ENCODE measurements at regions of chrX and their contacts with region 1.

Region 1: DNA sequence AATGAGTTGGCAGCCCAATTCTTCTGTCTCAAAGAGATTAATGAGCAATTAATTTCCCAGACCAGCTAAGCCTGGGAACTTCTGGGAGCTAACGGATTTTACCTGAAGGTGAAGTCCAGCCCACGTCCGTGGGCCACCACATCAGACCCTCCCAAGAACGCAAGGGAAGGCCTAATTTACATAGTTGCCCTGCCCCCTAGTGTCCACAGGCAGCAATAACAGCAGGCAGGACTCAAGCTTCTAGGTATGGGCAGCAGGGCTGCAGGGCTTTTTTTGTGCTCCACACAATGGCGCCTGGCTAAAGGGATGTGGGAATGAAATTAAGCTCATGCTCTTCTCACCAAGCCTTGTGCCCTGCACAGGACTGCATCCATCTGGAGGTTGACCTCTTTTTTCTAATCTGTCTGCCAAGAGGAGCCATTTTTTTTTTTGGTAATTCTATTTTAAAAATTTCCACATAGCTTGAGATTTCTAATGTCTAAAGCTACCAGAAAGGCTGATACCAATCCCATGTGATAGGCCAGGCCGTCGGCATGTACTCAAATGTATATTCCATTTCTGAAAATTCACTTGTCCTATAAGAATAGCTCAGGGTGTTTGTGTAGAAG is 111.9 kb upstream of the TMEM164 start:
- DNase-seq: peak in 1 of 2 experiments; percentile 54
- H3K4me3 ChIP-seq: no peak overlapping the region
- H3K27ac ChIP-seq: no peak overlapping the region
- H3K4me1 ChIP-seq: no peaks in the 10 kb centered on the region
- H3K27me3 ChIP-seq: no peaks in the 10 kb centered on the region
- CTCF ChIP-seq: peak; percentile 98

Region 2: GRCh38 chrX:108199691-108200090 is 1691.3 kb before region 1 on chrX:
- CTCF ChIA-PET with region 1: no interaction called
- POLR2A ChIA-PET with region 1: no interaction called
- intact Hi-C with region 1: loop called (anchors 5 kb)
- DNase-seq: peak; percentile 43 to 44
- H3K4me3 ChIP-seq: no peak overlapping the region
- H3K27ac ChIP-seq: no peak overlapping the region
- H3K4me1 ChIP-seq: no peaks in the 10 kb centered on the region
- H3K27me3 ChIP-seq: no peaks in the 10 kb centered on the region
- CTCF ChIP-seq: peak; percentile 77

Region 3: GRCh38 chrX:109635176-109635575 is 255.8 kb before region 1 on chrX:
- CTCF ChIA-PET with region 1: interaction called, 9 read pairs
- POLR2A ChIA-PET with region 1: no interaction called
- intact Hi-C with region 1: loop called (anchors 5 kb)
- DNase-seq: peak in 1 of 2 experiments; percentile 4
- H3K4me3 ChIP-seq: no peak overlapping the region
- H3K27ac ChIP-seq: no peak overlapping the region
- H3K4me1 ChIP-seq: no peaks in the 10 kb centered on the region
- H3K27me3 ChIP-seq: no peaks in the 10 kb centered on the region
- CTCF ChIP-seq: peak; percentile 71

Region 4: GRCh38 chrX:109760241-109760922 is 130.6 kb before region 1 on chrX:
- CTCF ChIA-PET with region 1: interaction called, 19 read pairs
- POLR2A ChIA-PET with region 1: no interaction called
- intact Hi-C with region 1: no loop called
- DNase-seq: peak; percentile 12 to 47
- H3K4me3 ChIP-seq: no peak overlapping the region
- H3K27ac ChIP-seq: no peak overlapping the region
- H3K4me1 ChIP-seq: peaks cover 15% of the 10 kb centered on the region
- H3K27me3 ChIP-seq: no peaks in the 10 kb centered on the region
- CTCF ChIP-seq: no peak

Region 5: GRCh38 chrX:109793191-109793590 is 97.8 kb before region 1 on chrX:
- CTCF ChIA-PET with region 1: no interaction called
- POLR2A ChIA-PET with region 1: no interaction called
- intact Hi-C with region 1: no loop called
- DNase-seq: peak in 1 of 2 experiments; percentile 40
- H3K4me3 ChIP-seq: no peak overlapping the region
- H3K27ac ChIP-seq: no peak overlapping the region
- H3K4me1 ChIP-seq: peaks cover 9% of the 10 kb centered on the region
- H3K27me3 ChIP-seq: no peaks in the 10 kb centered on the region
- CTCF ChIP-seq: no peak

Region 6: DNA sequence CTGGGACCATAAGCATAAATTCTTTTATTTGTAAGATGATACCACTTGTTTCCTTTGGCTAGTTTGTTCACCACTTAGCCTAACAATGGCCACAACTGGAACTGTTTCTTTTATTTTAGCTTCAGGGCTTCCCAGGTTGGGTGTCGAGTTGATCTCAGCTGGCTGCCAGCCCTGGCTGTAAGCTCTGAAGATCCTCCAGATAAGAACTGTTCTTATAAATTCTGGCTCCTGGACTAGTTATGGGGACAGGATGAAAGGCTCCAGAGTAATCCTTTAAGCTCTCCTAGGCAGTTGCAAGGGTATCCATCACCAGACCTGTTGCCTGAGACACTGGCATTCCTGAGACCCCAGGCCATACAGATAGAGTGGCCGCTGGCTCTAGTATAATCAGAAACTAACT is 28.6 kb before region 1 on chrX:
- CTCF ChIA-PET with region 1: no interaction called
- POLR2A ChIA-PET with region 1: no interaction called
- intact Hi-C with region 1: loop called (anchors 2 kb)
- DNase-seq: peak; percentile 41 to 57
- H3K4me3 ChIP-seq: no peak overlapping the region
- H3K27ac ChIP-seq: no peak overlapping the region
- H3K4me1 ChIP-seq: 0 out of 2 replicates have a peak, but pooled peaks cover 10% of the 10 kb centered on the region
- H3K27me3 ChIP-seq: no peaks in the 10 kb centered on the region
- CTCF ChIP-seq: no peak

Region 7: GRCh38 chrX:109911046-109911445 is 20.0 kb after region 1 on chrX:
- CTCF ChIA-PET with region 1: no interaction called
- POLR2A ChIA-PET with region 1: no interaction called
- intact Hi-C with region 1: no loop called
- DNase-seq: no peak
- H3K4me3 ChIP-seq: no peak overlapping the region
- H3K27ac ChIP-seq: no peak overlapping the region
- H3K4me1 ChIP-seq: no peaks in the 10 kb centered on the region
- H3K27me3 ChIP-seq: no peaks in the 10 kb centered on the region
- CTCF ChIP-seq: peak; percentile 80

Region 8: GRCh38 chrX:110418316-110419235 is 527.6 kb after region 1 on chrX:
- CTCF ChIA-PET with region 1: no interaction called
- POLR2A ChIA-PET with region 1: interaction called, 10 read pairs
- intact Hi-C with region 1: loop called (anchors 5 kb)
- DNase-seq: no peak
- H3K4me3 ChIP-seq: no peak overlapping the region
- H3K27ac ChIP-seq: no peak overlapping the region
- H3K4me1 ChIP-seq: 0 out of 2 replicates have a peak, but pooled peaks cover 7% of the 10 kb centered on the region
- H3K27me3 ChIP-seq: no peaks in the 10 kb centered on the region
- CTCF ChIP-seq: peak; percentile 48; the same call in 1 of the 2 replicates